ENCODE measurements at regions of chr2 and their contacts with region 1.

Region 1: DNA sequence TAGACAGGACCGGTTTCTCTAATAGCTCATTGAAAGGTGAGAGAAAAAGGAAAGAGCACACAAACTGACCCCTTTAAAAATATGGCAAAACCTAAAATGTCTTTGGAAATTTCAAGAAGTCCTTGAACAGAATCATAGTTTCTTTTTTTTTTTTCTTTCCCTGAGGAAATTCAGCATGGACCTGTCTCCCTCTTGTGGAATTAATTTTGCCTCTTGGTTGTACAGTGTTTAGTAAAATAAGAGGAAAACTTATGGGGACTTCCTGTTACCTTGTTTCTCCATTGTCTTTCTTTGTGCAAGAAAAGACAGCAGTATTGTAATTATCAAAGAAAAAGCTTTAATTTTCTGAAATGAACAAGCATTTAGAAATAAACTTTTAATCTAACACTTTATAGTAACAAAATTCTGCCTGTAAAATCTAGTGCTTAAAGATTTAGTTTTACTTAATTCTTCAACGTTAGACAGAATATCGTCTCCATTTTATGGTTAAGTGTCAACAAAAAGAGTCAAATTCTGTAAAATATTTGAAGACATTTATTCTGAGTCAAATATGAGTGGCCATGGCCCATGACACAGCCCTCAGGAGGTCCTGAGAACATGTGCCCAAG is 176.3 kb upstream of the NABP1 start:
- DNase-seq: no peak

Region 2: DNA sequence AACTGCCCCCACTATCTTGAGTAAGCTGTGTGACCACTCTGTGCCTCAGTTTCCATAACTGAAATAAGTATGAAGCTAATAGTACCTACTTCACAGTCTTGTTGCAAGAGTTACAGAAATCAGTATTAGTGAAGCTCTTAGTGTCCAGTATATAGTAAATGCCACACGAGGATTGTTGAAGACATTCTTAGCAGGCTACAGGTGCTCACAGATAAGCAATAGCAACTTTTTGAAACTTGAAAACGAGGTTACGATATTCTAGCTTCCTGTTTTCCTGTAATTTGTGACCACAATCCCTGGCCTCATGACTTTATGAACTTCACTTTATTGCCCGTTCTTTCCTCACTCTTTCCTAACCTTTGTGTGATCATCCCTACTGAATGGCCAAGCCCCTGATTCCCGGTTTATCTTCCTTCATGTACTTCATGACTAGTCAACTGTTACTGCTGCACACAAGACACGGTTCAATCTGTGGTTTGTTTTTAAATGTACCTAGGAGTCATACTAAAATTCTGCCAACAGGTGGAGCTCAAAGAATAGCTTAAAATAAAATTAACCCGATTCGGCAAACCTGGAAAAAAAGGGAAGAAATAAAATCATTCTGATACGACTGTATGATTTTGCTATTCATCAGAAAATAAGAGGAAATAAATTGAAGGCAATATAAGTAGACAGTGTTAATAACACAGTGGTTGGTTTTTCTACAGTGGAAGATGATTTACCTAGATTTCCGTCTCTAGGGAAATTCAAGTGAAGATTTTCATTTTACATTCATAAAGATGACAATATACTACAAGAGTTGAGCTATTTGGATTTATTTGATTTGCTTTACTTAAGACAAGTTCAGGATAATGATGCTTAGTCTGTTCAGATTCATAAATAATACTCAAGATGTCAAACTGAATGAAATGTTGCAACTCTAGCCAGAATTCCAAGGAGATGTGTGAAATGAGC is 449.6 kb before region 1 on chr2:
- CTCF ChIA-PET with region 1: interaction called, 10 read pairs
- POLR2A ChIA-PET with region 1: interaction called, 3 read pairs
- DNase-seq: peak; percentile 39

Region 3: DNA sequence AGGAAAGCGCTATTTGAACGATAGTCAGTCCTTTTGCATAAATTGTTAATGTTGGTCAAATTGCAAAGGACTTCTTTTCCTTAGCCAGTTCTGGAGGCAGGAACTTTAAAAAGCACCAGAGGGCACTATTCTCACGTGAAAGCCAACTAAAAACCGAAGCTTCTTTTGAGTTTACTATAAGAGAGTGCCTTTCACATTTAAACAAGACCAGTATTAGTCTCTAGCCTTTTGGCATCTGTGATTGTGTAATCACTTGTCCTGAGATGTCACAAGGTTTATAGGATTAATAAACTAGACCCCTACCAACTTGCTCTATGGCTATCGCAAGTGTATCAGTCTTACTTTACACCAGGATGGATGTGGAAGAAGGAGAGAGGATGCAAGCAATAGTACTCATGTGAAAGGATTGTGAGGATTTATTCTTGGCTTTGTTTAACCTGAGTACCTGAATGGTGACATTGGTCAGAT is 336.5 kb before region 1 on chr2:
- CTCF ChIA-PET with region 1: interaction called, 15 read pairs
- POLR2A ChIA-PET with region 1: no interaction called
- DNase-seq: peak; percentile 45

Region 4: DNA sequence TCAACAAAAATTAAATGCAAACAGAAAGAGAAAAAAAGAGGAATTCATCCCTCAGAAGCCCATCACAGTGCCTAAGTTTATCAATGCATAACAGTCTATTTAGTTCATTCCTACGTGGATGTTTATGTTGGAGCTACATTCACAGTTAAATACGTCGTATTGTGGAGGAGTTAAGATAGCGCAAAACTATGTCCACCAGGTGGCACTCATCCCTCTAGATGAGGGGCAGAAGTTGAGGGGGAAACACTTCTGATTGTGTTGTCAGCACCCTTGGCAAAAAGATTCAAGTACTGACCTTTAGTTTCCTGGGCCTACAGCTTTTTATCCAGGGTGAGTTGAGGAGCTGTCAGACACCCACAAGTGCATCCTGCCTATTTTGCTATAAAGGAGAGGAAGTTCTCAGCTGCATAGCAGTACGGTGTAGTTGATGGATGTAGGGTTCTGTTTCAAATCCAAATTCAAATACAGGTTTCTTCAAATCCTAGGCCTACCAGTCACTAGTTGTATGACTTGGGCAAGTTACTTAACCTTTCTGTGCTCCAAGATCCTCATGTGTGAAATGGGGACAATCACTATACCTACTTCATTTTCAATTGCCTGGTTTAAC is 283.3 kb before region 1 on chr2:
- CTCF ChIA-PET with region 1: interaction called, 15 read pairs
- POLR2A ChIA-PET with region 1: no interaction called
- DNase-seq: peak; percentile 61

Region 5: GRCh38 chr2:193024791-193025190 is 1523.1 kb after region 1 on chr2:
- CTCF ChIA-PET with region 1: no interaction called
- POLR2A ChIA-PET with region 1: no interaction called
- DNase-seq: no peak

Measured in HEK293T (cell line).